BJ (cell line): ENCODE measurements at regions of chr14 and their contacts with region 1.

Region 1: DNA sequence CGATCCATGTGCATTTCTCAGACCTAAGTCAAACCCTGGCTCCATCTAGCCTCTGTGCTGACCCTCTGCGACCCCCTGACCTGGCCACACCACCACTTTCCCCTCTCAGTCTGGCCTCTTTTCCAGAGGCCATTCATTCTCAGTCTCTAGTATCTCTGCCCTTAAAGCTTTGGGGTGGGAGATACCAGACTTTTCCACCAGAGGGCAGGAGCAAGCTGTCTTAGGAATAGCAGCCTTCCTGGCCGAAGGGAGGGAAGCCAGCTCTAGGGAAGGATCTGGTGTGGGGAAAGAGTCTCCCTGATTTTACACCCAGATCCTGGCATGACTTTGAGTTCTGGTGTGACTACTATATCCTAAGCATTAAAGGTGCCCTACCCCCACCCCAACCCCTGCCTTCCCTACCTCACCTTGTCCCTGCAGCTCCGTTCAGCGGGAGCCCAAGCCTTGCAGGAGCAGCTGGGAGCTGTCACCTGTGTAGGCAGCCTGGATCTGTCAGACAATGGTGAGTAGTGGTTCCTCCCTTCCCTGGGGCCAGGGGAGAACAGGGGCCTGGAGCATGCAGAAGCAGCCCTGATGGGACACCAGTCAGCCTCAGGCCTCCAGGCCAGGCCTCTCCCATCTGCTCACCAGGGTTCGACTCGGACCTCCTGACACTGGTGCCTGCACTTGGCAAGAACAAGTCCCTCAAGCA is 6.6 kb downstream of the CARMIL3 start:
- DNase-seq: no peak
- H3K4me3 ChIP-seq: no peak overlapping the region
- H3K27me3 ChIP-seq: peaks cover 10% of the 10 kb centered on the region
- CTCF ChIP-seq: peak; percentile 86

Region 2: GRCh38 chr14:24075485-24076301 is 17.3 kb after region 1 on chr14:
- CTCF ChIA-PET with region 1: interaction called, 33 read pairs
- POLR2A ChIA-PET with region 1: no interaction called
- DNase-seq: no peak
- H3K4me3 ChIP-seq: no peak overlapping the region
- H3K27me3 ChIP-seq: peaks cover 22% of the 10 kb centered on the region
- CTCF ChIP-seq: no peak

Region 3: GRCh38 chr14:24086193-24086955 is 28.0 kb after region 1 on chr14:
- CTCF ChIA-PET with region 1: interaction called, 200 read pairs
- POLR2A ChIA-PET with region 1: no interaction called
- DNase-seq: no peak
- H3K4me3 ChIP-seq: no peak overlapping the region
- H3K27me3 ChIP-seq: peaks cover 12% of the 10 kb centered on the region
- CTCF ChIP-seq: no peak

Region 4: DNA sequence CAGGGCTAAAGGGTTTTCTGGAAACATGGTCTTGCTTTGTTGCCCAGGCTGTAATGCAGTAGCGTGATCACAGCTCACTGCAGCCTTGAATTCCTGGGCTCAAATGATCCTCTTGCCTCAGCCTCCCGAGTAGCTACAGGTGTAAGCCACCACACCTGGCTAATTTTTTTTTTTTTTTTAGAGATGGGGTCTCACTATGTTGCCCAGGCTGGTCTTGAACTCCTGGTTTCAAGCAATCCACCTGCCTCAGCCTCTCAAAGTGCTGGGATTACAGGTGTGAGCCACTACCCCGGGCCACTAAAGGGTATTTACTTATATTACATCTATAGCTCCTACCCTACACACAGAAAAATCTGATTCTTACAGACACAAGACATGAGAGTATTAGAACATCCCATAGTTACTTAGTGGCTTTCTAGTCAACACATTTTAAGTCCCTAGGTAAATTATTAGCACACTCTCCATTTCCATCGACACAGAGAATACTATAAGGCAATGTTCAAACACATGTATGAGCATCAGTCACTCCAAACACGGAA is 50.0 kb after region 1 on chr14:
- CTCF ChIA-PET with region 1: interaction called, 66 read pairs
- POLR2A ChIA-PET with region 1: interaction called, 3 read pairs
- DNase-seq: no peak
- H3K4me3 ChIP-seq: no peak overlapping the region
- H3K27me3 ChIP-seq: no peaks in the 10 kb centered on the region
- CTCF ChIP-seq: no peak

Region 5: GRCh38 chr14:24160850-24161804 is 102.7 kb after region 1 on chr14 and contains the start of gene IRF9:
- CTCF ChIA-PET with region 1: interaction called, 11 read pairs
- POLR2A ChIA-PET with region 1: no interaction called
- DNase-seq: peak; percentile 78
- H3K4me3 ChIP-seq: peak within 1 kb of the TSS; percentile 60
- H3K27me3 ChIP-seq: no peaks in the 10 kb centered on the region
- CTCF ChIP-seq: peak; percentile 96
- polyA plus RNA-seq, gene IRF9: 84.8 and 107 TPM in 2 replicates